ENCODE measurements at regions of chr9 and their contacts with region 1.

Region 1: GRCh38 chr9:21096172-21096900 is 18.6 kb upstream of the IFNB1 start:
- DNase-seq: peak; percentile 53
- ATAC-seq: peak; percentile 90
- H3K4me3 Mint-ChIP-seq: peak overlapping the region; percentile 74
- H3K27ac Mint-ChIP-seq: peak overlapping the region; percentile 85
- H3K4me1 Mint-ChIP-seq: peaks cover 48% of the 10 kb centered on the region
- H3K27me3 Mint-ChIP-seq: no peaks in the 10 kb centered on the region

Region 2: GRCh38 chr9:21110708-21111576 is 14.6 kb after region 1 on chr9:
- CTCF ChIA-PET with region 1: interaction called, 26 read pairs
- POLR2A ChIA-PET with region 1: interaction called, 3 read pairs
- DNase-seq: peak; percentile 42
- ATAC-seq: peak; percentile 87
- H3K4me3 Mint-ChIP-seq: no peak overlapping the region
- H3K27ac Mint-ChIP-seq: no peak overlapping the region
- H3K4me1 Mint-ChIP-seq: no peaks in the 10 kb centered on the region
- H3K27me3 Mint-ChIP-seq: peaks cover 19% of the 10 kb centered on the region

Measured in activated CD8-positive, alpha-beta T cell treated with anti-CD3 and anti-CD28 coated beads, Interleukin-2, amount 10 ng/mL, durations not matched to agents 7 days and 5 days (primary cell).